HEK293 (cell line): ENCODE measurements at regions of chr3 and their contacts with region 1.

Region 1: GRCh38 chr3:158845765-158846350 is 44.0 kb downstream of the MFSD1 start:
- H3K4me3 ChIP-seq: no peak overlapping the region
- H3K27ac ChIP-seq: no peak overlapping the region
- H3K4me1 ChIP-seq: no peaks in the 10 kb centered on the region
- CTCF ChIP-seq: peak; percentile 24; the same call in 1 of the 2 replicates

Region 2: GRCh38 chr3:158819282-158819681 is 26.6 kb before region 1 on chr3:
- CTCF ChIA-PET with region 1: no interaction called
- POLR2A ChIA-PET with region 1: no interaction called
- H3K4me3 ChIP-seq: no peak overlapping the region
- H3K27ac ChIP-seq: no peak overlapping the region
- H3K4me1 ChIP-seq: no peaks in the 10 kb centered on the region
- CTCF ChIP-seq: no peak

Region 3: DNA sequence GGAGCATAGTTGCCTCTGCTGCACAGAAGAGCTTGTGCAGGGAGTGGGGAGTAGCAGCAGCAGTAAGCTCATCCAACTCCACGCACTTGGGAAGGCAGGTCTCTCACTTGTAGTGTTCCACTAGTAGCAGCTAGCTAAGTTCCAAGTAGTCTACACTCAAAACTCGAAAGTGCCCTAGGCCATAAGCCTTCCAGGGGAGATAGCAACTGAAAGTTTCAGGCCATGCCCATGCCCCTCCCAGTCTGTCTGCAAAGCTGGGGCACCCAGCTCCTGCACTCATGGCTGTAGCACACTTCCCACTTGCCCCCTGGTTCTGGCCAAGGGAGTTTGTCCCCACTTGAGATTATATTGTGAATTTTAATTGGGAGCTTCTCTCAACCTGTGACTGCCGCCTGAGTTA is 13.5 kb after region 1 on chr3:
- CTCF ChIA-PET with region 1: interaction called, 10 read pairs
- POLR2A ChIA-PET with region 1: no interaction called
- H3K4me3 ChIP-seq: no peak overlapping the region
- H3K27ac ChIP-seq: no peak overlapping the region
- H3K4me1 ChIP-seq: no peaks in the 10 kb centered on the region
- CTCF ChIP-seq: no peak

Region 4: DNA sequence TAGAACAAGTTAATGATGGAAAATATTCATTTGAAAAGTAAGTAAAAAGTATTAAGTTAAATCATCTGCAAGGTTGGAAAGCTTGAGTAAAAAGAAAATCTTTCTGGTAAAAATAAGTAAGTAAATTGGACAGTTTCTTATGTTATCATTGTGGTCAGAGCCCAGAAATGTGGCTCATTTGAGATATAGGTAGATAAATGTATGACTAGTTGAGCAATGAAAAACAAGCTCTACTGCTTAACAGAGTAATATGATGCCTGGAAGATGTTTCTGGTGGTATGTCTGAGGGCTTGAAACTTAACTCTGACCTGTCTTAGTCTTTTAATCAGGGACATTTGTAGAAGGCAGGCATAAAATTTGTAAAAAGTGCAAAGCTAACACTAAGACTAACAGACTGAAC is 400.0 kb after region 1 on chr3:
- CTCF ChIA-PET with region 1: interaction called, 27 read pairs
- POLR2A ChIA-PET with region 1: no interaction called
- H3K4me3 ChIP-seq: no peak overlapping the region
- H3K27ac ChIP-seq: no peak overlapping the region
- H3K4me1 ChIP-seq: no peaks in the 10 kb centered on the region
- CTCF ChIP-seq: no peak

Region 5: DNA sequence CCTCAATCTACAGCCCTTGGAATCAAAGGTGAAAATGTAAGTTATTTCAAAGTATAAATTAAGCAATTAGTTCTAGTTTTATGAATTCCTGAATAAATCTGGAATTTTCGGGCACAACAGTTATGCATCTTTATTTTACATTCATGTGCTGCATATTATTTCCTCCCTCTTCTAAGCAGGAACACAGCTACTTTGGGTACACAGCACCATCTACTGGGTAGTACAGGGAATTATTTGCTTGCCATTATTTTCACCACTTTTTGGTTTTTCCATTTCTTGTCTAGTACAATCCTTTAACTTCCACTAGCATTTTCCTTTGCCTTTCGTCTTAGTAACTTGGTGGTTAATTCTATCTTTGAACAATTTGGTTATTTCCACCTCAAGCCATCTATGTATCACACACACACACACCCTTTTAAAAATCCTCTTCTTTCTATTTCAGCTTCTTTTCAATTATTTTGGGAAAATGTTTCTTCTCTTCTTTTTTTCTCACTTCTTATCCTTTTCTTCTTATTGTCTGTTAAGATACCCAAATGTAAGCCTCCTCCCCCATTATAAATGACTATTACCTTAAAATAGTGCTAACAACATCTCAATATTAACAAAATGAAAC is 407.0 kb after region 1 on chr3:
- CTCF ChIA-PET with region 1: interaction called, 82 read pairs
- POLR2A ChIA-PET with region 1: no interaction called
- H3K4me3 ChIP-seq: no peak overlapping the region
- H3K27ac ChIP-seq: no peak overlapping the region
- H3K4me1 ChIP-seq: no peaks in the 10 kb centered on the region
- CTCF ChIP-seq: peak; percentile 48

Region 6: GRCh38 chr3:159260049-159260662 is 414.3 kb after region 1 on chr3:
- CTCF ChIA-PET with region 1: interaction called, 82 read pairs
- POLR2A ChIA-PET with region 1: no interaction called
- H3K4me3 ChIP-seq: no peak overlapping the region
- H3K27ac ChIP-seq: no peak overlapping the region
- H3K4me1 ChIP-seq: no peaks in the 10 kb centered on the region; the same call in 1 of the 2 replicates
- CTCF ChIP-seq: peak; percentile 40; the same call in 1 of the 2 replicates